ENCODE measurements at regions of chr20 and their contacts with region 1.

Region 1: GRCh38 chr20:44475694-44476560 is at the start of gene TTPAL:
- DNase-seq: peak; percentile 98
- H3K4me3 Mint-ChIP-seq: peak within 1 kb of the TSS; percentile 100
- H3K27ac Mint-ChIP-seq: peak within 1 kb of the TSS; percentile 94
- H3K4me1 Mint-ChIP-seq: peaks cover 26% of the 10 kb centered on the region
- H3K27me3 Mint-ChIP-seq: no peaks in the 10 kb centered on the region
- CTCF ChIP-seq: no peak
- total RNA-seq, gene TTPAL: 39.9 and 42.2 TPM in 2 replicates

Region 2: DNA sequence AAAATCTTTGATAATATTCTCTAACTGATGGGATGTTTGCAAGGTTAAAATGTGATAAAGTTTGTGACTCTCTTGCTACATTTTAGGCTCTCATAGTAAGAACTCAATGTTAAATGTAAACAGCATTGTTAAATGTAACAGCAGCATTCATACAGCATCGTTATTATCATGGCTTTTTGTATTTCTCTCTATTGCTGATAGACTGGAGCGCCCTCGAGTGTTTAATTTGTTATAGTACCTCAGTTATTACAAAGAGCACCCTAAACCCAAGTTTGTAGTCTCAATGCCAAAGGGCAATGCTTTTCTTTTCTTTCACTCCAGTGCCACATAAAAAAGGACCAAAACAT is 15.2 kb before region 1 on chr20:
- CTCF ChIA-PET with region 1: interaction called, 11 read pairs
- intact Hi-C with region 1: no loop called
- DNase-seq: peak; percentile 40
- H3K4me3 Mint-ChIP-seq: no peak overlapping the region
- H3K27ac Mint-ChIP-seq: no peak overlapping the region
- H3K4me1 Mint-ChIP-seq: peaks cover 23% of the 10 kb centered on the region
- H3K27me3 Mint-ChIP-seq: no peaks in the 10 kb centered on the region
- CTCF ChIP-seq: peak; percentile 67

Region 3: GRCh38 chr20:44496976-44497375 is 21.0 kb after region 1 on chr20:
- CTCF ChIA-PET with region 1: no interaction called
- intact Hi-C with region 1: no loop called
- DNase-seq: no peak
- H3K4me3 Mint-ChIP-seq: no peak overlapping the region
- H3K27ac Mint-ChIP-seq: no peak overlapping the region
- H3K4me1 Mint-ChIP-seq: peaks cover 11% of the 10 kb centered on the region
- H3K27me3 Mint-ChIP-seq: no peaks in the 10 kb centered on the region
- CTCF ChIP-seq: no peak

Region 4: DNA sequence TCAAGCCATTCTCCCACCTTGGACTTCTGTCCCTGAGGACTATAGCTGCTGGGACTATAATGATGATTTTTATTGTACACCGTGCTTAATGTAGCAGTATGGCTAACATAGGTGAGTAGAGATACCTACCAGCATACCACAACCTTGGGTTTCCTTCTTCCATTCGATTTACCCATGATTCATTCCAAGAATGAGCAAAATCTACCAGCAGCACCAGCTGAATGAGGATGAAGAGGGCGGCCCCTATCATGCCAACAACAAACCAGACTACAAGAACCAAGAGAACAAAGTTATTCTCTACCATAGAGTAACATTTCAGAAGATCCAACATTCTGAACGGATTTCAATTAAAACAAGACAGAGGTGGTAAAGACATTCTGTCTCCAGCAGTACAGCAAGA is 33.8 kb after region 1 on chr20:
- CTCF ChIA-PET with region 1: no interaction called
- intact Hi-C with region 1: no loop called
- DNase-seq: no peak
- H3K4me3 Mint-ChIP-seq: no peak overlapping the region
- H3K27ac Mint-ChIP-seq: no peak overlapping the region
- H3K4me1 Mint-ChIP-seq: no peaks in the 10 kb centered on the region
- H3K27me3 Mint-ChIP-seq: no peaks in the 10 kb centered on the region
- CTCF ChIP-seq: no peak

Region 5: DNA sequence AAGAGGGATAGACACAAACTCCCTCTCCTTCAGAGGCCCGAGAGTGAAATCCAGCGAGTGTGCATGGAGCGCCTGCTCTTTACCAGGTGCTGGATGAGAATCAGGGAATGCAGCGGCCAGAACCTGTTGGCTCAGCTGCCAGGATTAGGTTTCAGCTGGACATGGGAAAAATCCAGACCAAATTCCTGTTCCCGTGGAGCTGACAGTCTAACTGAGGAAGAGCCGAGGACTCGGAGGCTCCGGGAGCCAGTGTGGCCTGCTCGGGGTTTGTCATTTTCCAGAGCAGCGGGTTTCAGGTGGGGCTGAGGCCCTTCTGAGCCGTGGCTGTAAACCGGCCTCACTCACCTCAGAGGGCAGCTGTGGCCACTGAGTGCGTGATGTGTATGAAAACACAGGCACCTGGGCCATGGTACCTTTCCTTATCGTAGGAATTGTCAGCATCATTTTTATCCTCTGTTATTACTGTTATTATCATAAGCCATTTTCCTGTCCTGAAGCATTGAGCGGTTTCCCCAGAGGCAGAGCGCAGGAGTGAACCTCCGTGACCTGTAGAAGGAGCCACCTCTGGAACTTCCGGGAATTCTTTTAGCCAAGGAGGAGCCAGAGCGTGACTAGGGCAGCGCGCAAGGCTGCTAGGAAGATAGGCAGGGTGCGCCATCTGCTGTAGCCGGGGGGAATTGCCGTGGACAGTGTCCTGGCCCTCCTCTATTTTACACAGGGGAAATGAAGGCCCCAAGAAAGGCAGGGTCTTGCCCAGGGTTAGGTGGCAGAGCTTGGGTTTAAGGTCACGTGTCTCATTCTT is 133.8 kb after region 1 on chr20:
- CTCF ChIA-PET with region 1: interaction called, 3 read pairs
- intact Hi-C with region 1: loop called (anchors 2 kb)
- DNase-seq: peak; percentile 97
- H3K4me3 Mint-ChIP-seq: peak overlapping the region; percentile 52
- H3K27ac Mint-ChIP-seq: no peak overlapping the region
- H3K4me1 Mint-ChIP-seq: peaks cover 17% of the 10 kb centered on the region
- H3K27me3 Mint-ChIP-seq: no peaks in the 10 kb centered on the region
- CTCF ChIP-seq: peak; percentile 99

Region 6: GRCh38 chr20:45647441-45648050 is 1171.6 kb after region 1 on chr20:
- CTCF ChIA-PET with region 1: no interaction called
- intact Hi-C with region 1: no loop called
- DNase-seq: no peak
- H3K4me3 Mint-ChIP-seq: no peak overlapping the region
- H3K27ac Mint-ChIP-seq: no peak overlapping the region
- H3K4me1 Mint-ChIP-seq: no peaks in the 10 kb centered on the region
- H3K27me3 Mint-ChIP-seq: peaks cover 38% of the 10 kb centered on the region
- CTCF ChIP-seq: no peak